Aorta (tissue), 5 donors: ENCODE measurements at regions of chr10 and their contacts with region 1.

Region 1: GRCh38 chr10:80924063-80924952 is 386.6 kb downstream of the SH2D4B start:
- DNase-seq: no peak
- ATAC-seq: peak; percentile 62
- H3K4me3 ChIP-seq: no peak overlapping the region
- H3K27ac ChIP-seq: no peak overlapping the region
- H3K4me1 ChIP-seq: no peaks in the 10 kb centered on the region
- H3K27me3 ChIP-seq: no peaks in the 10 kb centered on the region

Region 2: DNA sequence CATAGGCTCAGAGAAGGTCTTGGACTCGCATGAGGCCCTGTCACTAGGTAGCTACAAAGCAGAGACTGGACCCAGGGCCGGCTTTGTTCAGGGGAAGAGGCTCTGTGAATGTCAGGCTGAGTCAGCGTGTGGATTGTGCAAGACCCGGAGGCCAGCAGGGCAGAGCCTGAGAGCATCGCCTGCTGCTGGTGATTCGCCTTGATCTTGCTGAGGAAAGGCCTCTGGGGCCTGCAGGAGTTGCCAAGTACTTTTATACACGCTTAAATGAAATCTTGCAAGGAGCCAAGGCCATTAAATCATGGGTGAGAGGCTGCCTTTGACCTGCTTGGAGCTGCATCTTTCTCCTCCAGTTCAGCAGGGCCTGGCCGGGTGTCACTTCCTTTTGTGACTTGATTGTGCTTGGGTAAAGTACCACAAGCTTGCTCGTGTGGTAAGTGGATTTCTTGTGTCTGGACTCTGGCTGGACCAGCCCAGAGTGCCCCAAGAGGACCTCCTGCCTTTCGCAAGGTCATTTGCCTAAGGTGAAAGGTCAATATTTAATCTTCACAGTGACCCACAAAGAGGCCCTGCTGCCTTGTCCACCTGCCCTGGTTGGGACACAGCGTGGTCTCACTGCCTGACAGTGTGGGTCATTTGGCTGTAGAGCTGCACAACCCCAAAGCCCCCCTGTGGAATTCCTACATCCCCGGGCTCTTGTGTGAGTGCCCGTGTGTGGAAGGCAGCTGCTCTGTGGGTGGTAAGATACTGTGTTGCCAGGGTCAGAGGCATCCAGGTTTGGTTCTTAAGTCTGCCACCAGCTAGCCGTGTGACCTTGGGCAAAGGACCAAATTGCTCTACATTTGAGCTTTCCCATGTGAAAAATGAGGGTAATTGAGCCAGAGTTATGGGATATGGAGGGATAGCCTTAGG is 425.2 kb before region 1 on chr10:
- intact Hi-C with region 1: no loop called
- DNase-seq: peak; percentile 95 to 96
- ATAC-seq: peak; percentile 93
- H3K4me3 ChIP-seq: no peak overlapping the region
- H3K27ac ChIP-seq: no peak overlapping the region
- H3K4me1 ChIP-seq: no peaks in the 10 kb centered on the region
- H3K27me3 ChIP-seq: no peaks in the 10 kb centered on the region

Region 3: DNA sequence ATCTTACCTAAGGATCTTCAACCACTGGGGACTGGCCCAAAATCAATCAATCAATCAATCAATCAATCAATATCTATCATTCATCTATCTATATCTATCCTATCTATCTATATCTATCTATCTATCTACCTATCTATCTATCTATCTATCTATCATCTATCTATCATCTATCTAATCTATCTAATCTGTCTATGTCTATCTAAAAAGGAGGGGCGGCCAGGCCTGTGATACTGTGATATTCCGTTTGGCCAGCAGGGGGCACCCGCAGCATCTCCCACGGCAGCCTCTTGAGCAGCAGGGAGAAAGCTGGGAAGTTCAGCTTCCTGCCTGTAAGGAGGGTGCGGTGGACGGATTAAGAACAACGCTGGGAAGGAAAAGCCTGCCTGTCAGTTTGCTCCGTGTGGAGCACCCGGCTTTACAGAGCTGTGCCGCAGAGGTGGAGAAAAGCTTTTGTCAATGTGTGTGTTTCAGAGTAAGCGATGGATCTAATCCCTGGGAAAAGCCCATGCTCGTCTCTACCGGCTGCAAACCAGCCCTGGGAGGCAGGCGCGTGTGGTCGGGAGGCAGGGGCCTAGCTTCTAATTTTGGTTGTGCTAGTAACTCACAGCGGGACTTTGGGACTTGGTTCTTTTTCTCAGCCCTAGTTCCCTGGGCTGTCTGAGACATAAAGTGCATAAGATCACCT is 261.6 kb before region 1 on chr10:
- intact Hi-C with region 1: loop called (anchors 2 to 5 kb)
- DNase-seq: peak; percentile 88 to 94
- ATAC-seq: peak; percentile 92
- H3K4me3 ChIP-seq: peak overlapping the region in 1 of 2 donors; percentile 33
- H3K27ac ChIP-seq: peak overlapping the region in 1 of 2 donors; percentile 82
- H3K4me1 ChIP-seq: no peaks in the 10 kb centered on the region
- H3K27me3 ChIP-seq: no peaks in the 10 kb centered on the region

Region 4: GRCh38 chr10:80699602-80700039 is 224.7 kb before region 1 on chr10:
- intact Hi-C with region 1: loop called in 1 of 2 experiments (anchors 10 kb)
- DNase-seq: peak; percentile 85 to 94
- ATAC-seq: peak; percentile 82
- H3K4me3 ChIP-seq: no peak overlapping the region
- H3K27ac ChIP-seq: no peak overlapping the region
- H3K4me1 ChIP-seq: no peaks in the 10 kb centered on the region
- H3K27me3 ChIP-seq: no peaks in the 10 kb centered on the region

Region 5: GRCh38 chr10:81953420-81953819 is 1029.1 kb after region 1 on chr10:
- intact Hi-C with region 1: no loop called
- DNase-seq: no peak
- ATAC-seq: no peak
- H3K4me3 ChIP-seq: no peak overlapping the region
- H3K27ac ChIP-seq: no peak overlapping the region
- H3K4me1 ChIP-seq: no peaks in the 10 kb centered on the region
- H3K27me3 ChIP-seq: no peaks in the 10 kb centered on the region